B cell (primary cell): ENCODE measurements at regions of chr9 and their contacts with region 1.

Region 1: GRCh38 chr9:124218438-124218982 is 39.2 kb upstream of the NEK6 start:
- DNase-seq: peak; percentile 90
- ATAC-seq: peak; percentile 62
- H3K4me3 ChIP-seq: peak overlapping the region in 1 of 5 experiments; percentile 40
- H3K4me3 Mint-ChIP-seq: peak overlapping the region; percentile 78
- H3K27ac ChIP-seq: peak overlapping the region; percentile 94 to 95
- H3K27ac Mint-ChIP-seq: peak overlapping the region; percentile 98
- H3K4me1 ChIP-seq: peaks cover 67 to 82% of the 10 kb centered on the region in 2 donors
- H3K4me1 Mint-ChIP-seq: peaks cover 85% of the 10 kb centered on the region
- H3K27me3 ChIP-seq: no peaks in the 10 kb centered on the region
- H3K27me3 Mint-ChIP-seq: no peaks in the 10 kb centered on the region
- CTCF ChIP-seq: no peak

Region 2: DNA sequence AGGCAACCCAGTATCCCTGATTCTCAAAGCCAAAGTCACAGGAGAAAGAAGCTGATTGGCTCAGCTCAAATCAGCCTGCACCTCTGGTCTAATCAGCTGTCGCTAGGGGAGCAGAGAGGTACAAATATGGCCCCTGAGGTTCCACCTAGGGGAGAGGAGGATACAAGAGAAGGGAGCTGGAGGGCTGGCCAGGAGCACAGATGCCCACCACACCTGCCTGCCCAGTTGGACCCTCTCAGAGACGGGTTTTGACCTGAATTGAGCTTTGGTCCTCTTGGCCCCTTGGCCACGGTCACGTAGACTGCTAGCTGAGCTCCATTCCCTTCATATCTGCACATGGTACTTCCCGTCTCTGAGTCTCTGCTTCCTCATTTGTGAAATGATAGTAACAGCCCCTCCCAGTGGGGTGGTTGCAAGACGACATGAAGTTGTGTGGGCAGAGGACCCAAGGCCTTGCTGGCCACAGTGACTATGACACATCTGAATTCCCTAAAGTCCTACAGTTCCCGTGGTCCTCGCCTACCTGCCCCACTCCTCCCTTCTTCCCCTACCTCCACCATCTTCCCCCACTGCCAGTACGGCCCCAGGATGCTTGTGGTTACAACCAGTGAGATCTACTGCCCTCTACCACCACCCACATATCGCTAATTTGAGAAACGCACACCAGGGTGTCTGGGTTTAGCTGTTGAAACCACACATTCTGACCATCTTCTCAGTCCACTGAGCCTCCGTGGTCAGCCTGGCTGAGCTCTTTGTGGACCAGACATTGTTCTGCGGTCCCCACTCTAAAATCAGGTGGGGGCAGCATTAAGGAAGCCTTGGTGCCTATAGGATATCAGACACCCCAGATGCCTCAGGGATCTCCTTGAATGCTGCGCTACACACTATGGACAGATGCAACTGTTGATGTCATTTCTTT is 21.1 kb before region 1 on chr9:
- CTCF ChIA-PET with region 1: interaction called, 44 read pairs
- POLR2A ChIA-PET with region 1: interaction called, 32 read pairs
- intact Hi-C with region 1: loop called (anchors 1 kb)
- DNase-seq: peak; percentile 88
- ATAC-seq: peak; percentile 84
- H3K4me3 ChIP-seq: peak overlapping the region in 4 of 5 experiments; percentile 22 to 42 (median 30)
- H3K4me3 Mint-ChIP-seq: peak overlapping the region; percentile 81
- H3K27ac ChIP-seq: peak overlapping the region; percentile 82 to 90
- H3K27ac Mint-ChIP-seq: peak overlapping the region; percentile 99
- H3K4me1 ChIP-seq: peaks cover 53 to 59% of the 10 kb centered on the region in 2 donors
- H3K4me1 Mint-ChIP-seq: peaks cover 57% of the 10 kb centered on the region
- H3K27me3 ChIP-seq: no peaks in the 10 kb centered on the region
- H3K27me3 Mint-ChIP-seq: no peaks in the 10 kb centered on the region
- CTCF ChIP-seq: peak; percentile 33

Region 3: DNA sequence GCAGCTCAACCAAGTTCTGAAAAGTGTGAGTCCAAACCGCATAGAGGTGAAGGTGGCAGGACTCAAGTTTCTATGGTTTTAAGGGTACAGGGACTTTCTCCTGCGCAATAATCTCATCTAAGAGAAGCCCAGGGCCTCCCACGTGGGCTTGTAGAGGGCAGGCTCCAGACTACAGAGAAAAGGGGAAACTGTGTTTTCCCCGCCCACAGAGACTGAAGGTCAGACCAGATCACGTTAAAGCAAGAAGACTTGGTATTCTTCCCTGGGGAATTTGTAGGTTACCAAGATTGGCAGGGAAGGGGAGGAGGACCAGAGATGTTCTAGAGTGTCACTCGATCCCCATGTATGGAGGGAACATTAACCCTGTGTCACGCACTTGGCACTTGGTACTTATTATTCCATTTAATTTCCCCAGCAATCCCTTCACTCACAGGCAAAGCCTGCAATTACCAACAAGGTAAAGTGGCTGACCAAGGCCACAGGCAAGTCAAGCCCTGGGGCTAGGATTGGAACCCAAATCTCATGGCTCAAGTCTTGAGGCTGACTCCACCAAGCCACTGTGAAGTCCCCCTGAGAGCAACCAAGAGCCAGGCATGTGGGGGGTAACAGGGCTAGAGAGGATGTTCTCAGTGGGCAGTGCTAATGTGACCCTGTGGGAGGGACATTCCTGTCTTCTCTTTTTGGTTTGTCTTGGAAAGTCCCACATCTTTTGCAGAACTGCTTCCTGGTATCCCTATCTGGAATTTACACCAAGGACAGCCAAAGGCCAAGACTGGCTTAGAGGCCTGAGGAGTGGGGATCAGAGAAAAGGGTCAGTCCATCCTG is 21.0 kb after region 1 on chr9:
- CTCF ChIA-PET with region 1: interaction called, 7 read pairs
- POLR2A ChIA-PET with region 1: interaction called, 3 read pairs
- intact Hi-C with region 1: loop called (anchors 1 kb)
- DNase-seq: peak; percentile 82
- ATAC-seq: peak; percentile 98
- H3K4me3 ChIP-seq: peak overlapping the region in 1 of 5 experiments; percentile 22
- H3K4me3 Mint-ChIP-seq: peak overlapping the region; percentile 38
- H3K27ac ChIP-seq: peak overlapping the region in 1 of 2 donors; percentile 40
- H3K27ac Mint-ChIP-seq: peak overlapping the region; percentile 85
- H3K4me1 ChIP-seq: peaks cover 25 to 37% of the 10 kb centered on the region in 2 donors
- H3K4me1 Mint-ChIP-seq: peaks cover 47% of the 10 kb centered on the region
- H3K27me3 ChIP-seq: no peaks in the 10 kb centered on the region
- H3K27me3 Mint-ChIP-seq: no peaks in the 10 kb centered on the region
- CTCF ChIP-seq: no peak

Region 4: DNA sequence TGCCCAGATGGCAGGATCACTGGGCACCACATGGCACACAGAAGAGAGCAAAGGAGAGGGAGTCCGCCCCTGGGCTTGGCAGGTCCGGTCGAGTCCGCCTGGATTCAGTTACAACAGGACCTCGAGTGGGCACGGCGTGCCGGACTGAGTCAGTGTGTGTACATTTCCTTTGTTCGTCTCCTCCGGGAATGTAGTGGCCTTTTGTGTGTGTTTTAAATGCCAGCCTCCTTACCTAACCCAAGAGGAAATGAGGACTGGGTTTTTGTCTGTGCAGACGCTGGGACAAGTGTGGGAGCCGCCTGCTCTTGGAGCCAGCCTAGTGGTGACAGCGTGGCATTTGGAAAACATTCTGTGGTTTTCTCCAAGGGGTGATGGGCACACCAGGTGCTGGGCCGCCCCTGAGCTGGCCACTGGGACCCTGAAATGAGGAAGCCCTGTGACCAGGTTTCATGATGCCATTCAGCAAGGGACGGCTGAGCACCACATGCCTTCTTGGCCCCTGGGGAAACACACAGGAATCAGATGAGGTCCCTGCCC is 48.8 kb after region 1 on chr9:
- CTCF ChIA-PET with region 1: no interaction called
- POLR2A ChIA-PET with region 1: interaction called, 13 read pairs
- intact Hi-C with region 1: loop called (anchors 2 kb)
- DNase-seq: peak; percentile 70
- ATAC-seq: peak; percentile 54
- H3K4me3 ChIP-seq: no peak overlapping the region
- H3K4me3 Mint-ChIP-seq: peak overlapping the region; percentile 74
- H3K27ac ChIP-seq: peak overlapping the region; percentile 73
- H3K27ac Mint-ChIP-seq: peak overlapping the region; percentile 91
- H3K4me1 ChIP-seq: peaks cover 69 to 98% of the 10 kb centered on the region in 2 donors
- H3K4me1 Mint-ChIP-seq: peaks cover 83% of the 10 kb centered on the region
- H3K27me3 ChIP-seq: no peaks in the 10 kb centered on the region
- H3K27me3 Mint-ChIP-seq: no peaks in the 10 kb centered on the region
- CTCF ChIP-seq: no peak

Region 5: DNA sequence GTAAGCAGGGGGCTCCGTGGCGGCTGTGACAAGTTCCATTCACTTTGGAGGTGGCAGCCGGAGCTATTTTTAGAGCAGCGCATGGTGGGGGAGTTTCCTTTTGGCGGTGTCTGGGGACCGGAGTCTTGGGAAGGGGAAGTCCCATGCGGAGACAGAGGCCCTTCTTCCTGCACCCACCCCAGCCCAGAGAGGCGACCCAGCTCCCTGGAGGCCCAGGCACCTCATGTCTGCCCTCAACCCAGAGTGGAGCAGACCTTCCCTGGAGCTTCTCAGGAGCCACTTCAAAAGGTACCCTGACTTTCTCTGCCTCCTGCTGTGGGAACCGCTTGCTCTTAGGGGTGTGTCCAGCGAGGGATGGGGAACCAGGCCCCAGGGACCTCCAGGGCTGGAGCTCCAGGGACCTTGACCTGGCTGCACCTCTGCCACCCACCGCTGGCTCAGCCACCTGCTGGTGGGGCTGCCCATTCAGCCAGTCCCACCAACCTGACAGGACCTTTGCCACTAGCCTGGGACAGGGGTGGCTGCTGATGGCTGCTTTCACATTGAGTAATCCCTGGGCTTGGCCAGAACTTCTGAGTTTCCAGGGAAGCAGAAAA is 73.4 kb after region 1 on chr9:
- CTCF ChIA-PET with region 1: interaction called, 8 read pairs
- POLR2A ChIA-PET with region 1: interaction called, 11 read pairs
- intact Hi-C with region 1: no loop called
- DNase-seq: peak; percentile 79
- ATAC-seq: peak; percentile 54
- H3K4me3 ChIP-seq: peak overlapping the region in 3 of 5 experiments; percentile 10 to 25 (median 20)
- H3K4me3 Mint-ChIP-seq: peak overlapping the region; percentile 43
- H3K27ac ChIP-seq: peak overlapping the region; percentile 55 to 63
- H3K27ac Mint-ChIP-seq: peak overlapping the region; percentile 80
- H3K4me1 ChIP-seq: peaks cover 68 to 87% of the 10 kb centered on the region in 2 donors
- H3K4me1 Mint-ChIP-seq: peaks cover 91% of the 10 kb centered on the region
- H3K27me3 ChIP-seq: no peaks in the 10 kb centered on the region
- H3K27me3 Mint-ChIP-seq: no peaks in the 10 kb centered on the region
- CTCF ChIP-seq: peak; percentile 35